ENCODE measurements at regions of chr6 and their contacts with region 1.

Region 1: GRCh38 chr6:26065952-26066380 is 21.3 kb upstream of the HFE start:
- DNase-seq: peak; percentile 92
- H3K4me3 ChIP-seq: no peak overlapping the region
- H3K27ac ChIP-seq: peak overlapping the region; percentile 16
- H3K4me1 ChIP-seq: peaks cover 3% of the 10 kb centered on the region
- H3K27me3 ChIP-seq: no peaks in the 10 kb centered on the region
- CTCF ChIP-seq: peak; percentile 88

Region 2: GRCh38 chr6:26097268-26097875 is 31.4 kb after region 1 on chr6:
- CTCF ChIA-PET with region 1: interaction called, 4 read pairs
- POLR2A ChIA-PET with region 1: no interaction called
- intact Hi-C with region 1: loop called (anchors 1 kb)
- DNase-seq: peak; percentile 80
- H3K4me3 ChIP-seq: no peak overlapping the region
- H3K27ac ChIP-seq: no peak overlapping the region
- H3K4me1 ChIP-seq: peaks cover under 1% of the 10 kb centered on the region
- H3K27me3 ChIP-seq: no peaks in the 10 kb centered on the region
- CTCF ChIP-seq: peak; percentile 82

Region 3: DNA sequence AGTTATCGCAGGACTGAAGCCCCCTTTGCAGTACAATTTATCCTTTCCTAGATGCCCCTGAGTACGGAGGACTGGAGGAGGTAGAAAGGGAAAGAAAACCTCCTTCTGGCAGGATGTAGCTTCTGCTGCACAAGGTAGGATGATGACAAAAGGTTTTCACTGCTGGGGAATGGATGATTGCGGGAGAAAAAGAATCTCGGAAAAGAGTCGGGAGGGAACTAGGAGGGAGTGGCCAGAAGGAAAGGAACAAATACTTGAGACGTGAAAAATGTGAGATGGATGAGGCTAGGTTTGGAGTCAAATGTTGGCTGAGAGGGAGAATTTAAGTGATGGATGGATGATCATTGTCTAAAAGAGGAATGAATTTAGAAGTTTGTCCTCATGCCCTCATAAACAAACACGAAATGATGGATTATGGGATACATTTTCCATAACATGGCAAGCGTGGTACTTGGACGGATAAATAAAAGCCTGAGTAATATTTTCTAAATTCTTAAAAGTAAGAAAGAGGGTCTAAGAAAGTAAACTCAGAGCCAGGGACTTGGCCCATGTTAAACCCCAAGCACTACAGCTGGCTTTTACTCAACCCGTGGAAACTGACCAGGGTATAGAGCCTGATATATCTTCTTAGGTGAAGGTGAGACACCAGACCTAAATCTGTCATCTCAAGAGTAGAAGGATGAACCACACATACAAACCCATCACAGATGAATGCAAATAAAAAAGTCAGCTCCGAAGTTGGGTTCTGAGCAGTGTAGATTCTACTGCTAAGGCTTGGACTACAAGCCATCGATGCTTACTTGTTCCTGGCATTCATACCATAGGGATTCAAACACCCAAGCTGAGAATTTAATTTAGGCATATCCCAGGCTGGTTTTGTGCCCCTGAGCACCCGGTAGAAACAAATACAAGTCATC is 93.6 kb after region 1 on chr6:
- CTCF ChIA-PET with region 1: no interaction called
- POLR2A ChIA-PET with region 1: no interaction called
- intact Hi-C with region 1: no loop called
- DNase-seq: peak; percentile 48
- H3K4me3 ChIP-seq: peak overlapping the region; percentile 89
- H3K27ac ChIP-seq: peak overlapping the region; percentile 99
- H3K4me1 ChIP-seq: peaks cover 12% of the 10 kb centered on the region
- H3K27me3 ChIP-seq: no peaks in the 10 kb centered on the region
- CTCF ChIP-seq: no peak